PC-9 (cell line): ENCODE measurements at regions of chr11 and their contacts with region 1.

Region 1: GRCh38 chr11:119077839-119078238 is 6.8 kb upstream of the HMBS start:
- DNase-seq: peak in 1 of 2 experiments; percentile 28
- H3K4me3 ChIP-seq: no peak overlapping the region
- H3K27ac ChIP-seq: no peak overlapping the region
- H3K4me1 ChIP-seq: no peaks in the 10 kb centered on the region
- H3K27me3 ChIP-seq: no peaks in the 10 kb centered on the region
- CTCF ChIP-seq: no peak

Region 2: GRCh38 chr11:119067371-119068222 is 10.2 kb before region 1 on chr11 and contains the start of gene VPS11:
- CTCF ChIA-PET with region 1: interaction called, 11 read pairs
- POLR2A ChIA-PET with region 1: no interaction called
- intact Hi-C with region 1: no loop called
- DNase-seq: peak; percentile 95 to 96
- H3K4me3 ChIP-seq: peak within 1 kb of the TSS; percentile 89
- H3K27ac ChIP-seq: peak within 1 kb of the TSS; percentile 55
- H3K4me1 ChIP-seq: peaks cover 8% of the 10 kb centered on the region
- H3K27me3 ChIP-seq: no peaks in the 10 kb centered on the region
- CTCF ChIP-seq: 0 out of 2 replicates have a peak, but pooled peaks have one; percentile 14
- total RNA-seq, gene VPS11: 21.1 and 22.9 TPM in 2 replicates